ENCODE measurements at regions of chr6 and their contacts with region 1.

Region 1: GRCh38 chr6:148440877-148441453 is 98.3 kb downstream of the SASH1 start:
- DNase-seq: peak; percentile 93
- ATAC-seq: peak; percentile 80
- H3K4me3 ChIP-seq: peak overlapping the region; percentile 55; the same call in 1 of the 2 replicates
- H3K27ac ChIP-seq: peak overlapping the region; percentile 99
- H3K4me1 ChIP-seq: peaks cover 40% of the 10 kb centered on the region
- H3K27me3 ChIP-seq: no peaks in the 10 kb centered on the region
- CTCF ChIP-seq: no peak

Region 2: GRCh38 chr6:148192310-148192709 is 248.7 kb before region 1 on chr6:
- CTCF ChIA-PET with region 1: no interaction called
- POLR2A ChIA-PET with region 1: no interaction called
- intact Hi-C with region 1: loop called (anchors 2 kb)
- DNase-seq: peak; percentile 76
- ATAC-seq: peak; percentile 80
- H3K4me3 ChIP-seq: peak overlapping the region; percentile 58
- H3K27ac ChIP-seq: peak overlapping the region; percentile 89
- H3K4me1 ChIP-seq: peaks cover 41% of the 10 kb centered on the region
- H3K27me3 ChIP-seq: no peaks in the 10 kb centered on the region
- CTCF ChIP-seq: no peak

Region 3: DNA sequence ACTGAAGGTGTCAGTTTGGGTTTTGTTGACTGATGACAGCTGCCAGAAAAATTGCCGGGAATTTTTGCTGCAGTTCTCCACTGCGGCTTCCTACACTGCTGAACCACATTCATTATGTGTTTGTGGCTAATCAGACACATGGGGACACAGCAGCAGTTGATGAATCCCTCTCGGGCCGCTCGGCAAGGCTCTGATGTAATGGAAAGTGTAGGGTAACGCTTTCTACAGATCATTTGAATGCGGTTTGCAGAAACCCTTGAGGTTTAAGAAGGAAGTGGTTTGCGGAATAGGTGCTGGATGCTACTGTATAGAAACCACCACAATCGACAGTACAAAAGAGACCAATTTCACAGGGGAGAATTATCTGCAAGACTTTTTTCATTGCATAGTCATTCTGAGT is 237.0 kb before region 1 on chr6:
- CTCF ChIA-PET with region 1: no interaction called
- POLR2A ChIA-PET with region 1: no interaction called
- intact Hi-C with region 1: no loop called
- DNase-seq: no peak
- ATAC-seq: no peak
- H3K4me3 ChIP-seq: no peak overlapping the region
- H3K27ac ChIP-seq: no peak overlapping the region
- H3K4me1 ChIP-seq: no peaks in the 10 kb centered on the region
- H3K27me3 ChIP-seq: no peaks in the 10 kb centered on the region
- CTCF ChIP-seq: no peak

Region 4: DNA sequence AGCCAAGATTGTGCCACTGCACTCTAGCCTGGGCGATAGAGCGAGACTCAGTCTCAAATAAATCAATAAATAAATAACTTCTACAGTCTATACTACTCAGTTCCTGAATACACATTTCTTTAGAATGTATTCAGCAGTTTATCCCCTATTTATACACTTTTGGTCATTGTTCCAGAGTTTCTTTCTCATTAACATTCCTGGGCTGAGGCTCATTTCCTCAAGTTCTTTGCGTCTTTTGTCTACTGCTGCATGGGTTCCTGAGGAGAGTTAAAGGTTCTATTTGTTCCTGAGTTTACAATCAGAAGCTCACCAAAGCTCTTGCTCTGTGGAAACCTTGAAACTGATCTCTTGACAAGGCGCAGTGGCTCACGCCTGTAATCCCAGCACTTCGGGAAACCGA is 136.0 kb before region 1 on chr6:
- CTCF ChIA-PET with region 1: no interaction called
- POLR2A ChIA-PET with region 1: no interaction called
- intact Hi-C with region 1: loop called (anchors 1 kb)
- DNase-seq: peak; percentile 81
- ATAC-seq: peak; percentile 74
- H3K4me3 ChIP-seq: no peak overlapping the region
- H3K27ac ChIP-seq: peak overlapping the region; percentile 71
- H3K4me1 ChIP-seq: peaks cover 22% of the 10 kb centered on the region
- H3K27me3 ChIP-seq: no peaks in the 10 kb centered on the region
- CTCF ChIP-seq: no peak

Region 5: GRCh38 chr6:148407372-148407771 is 33.6 kb before region 1 on chr6:
- CTCF ChIA-PET with region 1: no interaction called
- POLR2A ChIA-PET with region 1: no interaction called
- intact Hi-C with region 1: loop called (anchors 5 kb)
- DNase-seq: peak; percentile 91
- ATAC-seq: peak; percentile 94
- H3K4me3 ChIP-seq: no peak overlapping the region
- H3K27ac ChIP-seq: peak overlapping the region; percentile 52
- H3K4me1 ChIP-seq: no peaks in the 10 kb centered on the region
- H3K27me3 ChIP-seq: no peaks in the 10 kb centered on the region
- CTCF ChIP-seq: no peak

Measured in PC-3 (cell line).